ENCODE measurements at regions of chr10 and their contacts with region 1.

Region 1: DNA sequence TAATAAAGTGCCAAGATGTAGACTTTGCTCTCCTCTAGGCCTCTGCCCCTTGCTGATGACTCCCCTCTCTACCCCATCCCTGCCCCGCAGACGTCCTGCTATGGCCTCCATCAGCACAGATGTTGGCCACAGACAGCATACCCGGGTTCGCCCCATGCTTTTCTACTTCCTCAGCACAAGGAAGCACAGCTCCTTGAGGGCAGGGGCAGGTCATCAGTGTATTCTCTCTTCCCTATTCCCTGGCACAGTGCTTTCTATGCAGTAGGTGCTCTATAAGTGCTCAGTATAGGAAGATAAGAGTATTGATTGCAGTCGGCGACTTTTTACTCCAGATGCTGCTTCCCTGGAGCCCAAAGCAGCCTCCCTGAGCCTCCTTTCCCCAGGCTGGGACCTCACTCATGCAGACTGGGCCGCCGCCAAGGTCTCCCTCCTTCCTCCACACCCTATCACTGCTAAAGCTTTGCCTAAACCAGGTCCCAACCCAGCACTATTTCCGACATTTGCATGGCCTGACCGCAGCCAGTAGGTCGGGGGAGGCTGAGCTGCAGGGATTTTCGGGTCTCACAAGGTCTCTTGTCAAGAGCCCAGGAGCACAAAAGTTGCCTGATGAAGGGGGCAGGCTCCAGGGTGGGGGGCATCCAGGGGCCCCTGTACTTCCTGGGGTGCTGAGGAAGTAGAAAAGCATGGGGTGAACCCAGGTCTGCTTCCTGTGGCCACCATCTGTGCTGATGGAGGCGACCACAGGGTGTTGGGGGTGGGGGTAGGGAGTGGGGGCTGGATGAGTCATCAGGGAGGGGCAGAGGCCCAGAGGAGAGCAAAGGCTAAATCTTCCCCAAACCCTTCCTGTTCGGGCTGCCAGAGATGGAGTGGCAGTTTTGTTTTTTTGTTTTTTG is 8.0 kb downstream of the CALHM3 start:
- DNase-seq: peak; percentile 91
- H3K4me3 Mint-ChIP-seq: peak overlapping the region; percentile 59
- H3K27ac Mint-ChIP-seq: peak overlapping the region; percentile 89
- H3K4me1 Mint-ChIP-seq: peaks cover 51% of the 10 kb centered on the region
- H3K27me3 Mint-ChIP-seq: peaks cover 2% of the 10 kb centered on the region

Region 2: DNA sequence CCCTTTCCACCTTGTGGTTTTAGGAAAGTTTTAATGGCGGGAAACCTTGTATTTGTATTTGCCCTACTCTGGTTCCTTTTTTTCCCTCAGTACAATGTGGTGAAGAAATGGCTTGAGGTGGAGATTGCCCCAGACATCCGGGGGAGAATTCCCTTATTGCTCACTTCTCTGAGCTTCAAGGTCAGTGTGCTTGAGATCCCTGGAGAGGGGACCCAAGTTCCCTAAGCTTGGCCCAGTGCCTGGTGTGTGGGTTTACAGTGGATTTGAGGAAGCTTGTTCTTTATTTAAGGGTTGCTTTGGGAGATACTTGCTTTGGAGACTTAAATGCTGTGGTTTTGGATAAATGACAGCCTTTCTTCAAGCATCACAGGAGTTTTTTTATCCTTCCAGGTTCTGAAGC is 37.1 kb before region 1 on chr10:
- intact Hi-C with region 1: loop called (anchors 5 kb)
- DNase-seq: no peak
- H3K4me3 Mint-ChIP-seq: no peak overlapping the region
- H3K27ac Mint-ChIP-seq: no peak overlapping the region
- H3K4me1 Mint-ChIP-seq: peaks cover 28% of the 10 kb centered on the region
- H3K27me3 Mint-ChIP-seq: no peaks in the 10 kb centered on the region

Region 3: DNA sequence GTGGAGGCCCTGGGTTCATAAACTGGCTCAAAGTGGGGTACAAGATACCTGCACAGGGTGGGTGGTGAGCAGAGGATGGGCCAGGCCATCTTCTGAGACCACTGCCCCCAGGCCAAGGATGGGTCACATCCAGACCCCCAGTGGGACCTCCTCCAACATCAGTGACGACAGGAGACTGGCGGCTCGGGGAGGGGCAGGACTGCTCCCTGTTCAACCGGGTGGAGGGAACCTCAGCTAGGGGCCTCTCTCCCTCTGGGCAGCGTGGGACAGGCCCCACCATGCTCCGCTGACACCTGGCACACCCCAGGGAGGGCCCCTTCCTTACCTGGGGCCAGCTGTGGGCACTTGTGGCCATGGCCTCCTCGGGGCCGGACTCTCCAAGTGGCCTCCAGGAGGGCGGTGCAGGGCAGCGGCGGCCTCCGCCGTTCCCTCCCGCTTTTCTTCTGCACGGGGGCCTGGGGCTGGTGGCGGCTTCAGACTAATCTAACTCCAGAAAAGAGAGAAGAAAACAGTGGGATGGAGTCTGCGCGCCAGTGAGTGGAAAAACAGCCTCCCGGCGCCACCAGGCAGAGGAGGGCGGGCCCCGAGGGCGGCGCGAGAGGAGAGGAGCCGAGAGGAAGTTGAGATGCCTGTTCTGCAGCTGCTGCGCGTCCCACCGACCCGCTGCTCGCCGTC is 19.0 kb before region 1 on chr10 and contains the start of gene CALHM2:
- intact Hi-C with region 1: loop called (anchors 1 kb)
- DNase-seq: peak; percentile 90
- H3K4me3 Mint-ChIP-seq: peak within 1 kb of the TSS; percentile 95
- H3K27ac Mint-ChIP-seq: peak within 1 kb of the TSS; percentile 85
- H3K4me1 Mint-ChIP-seq: peaks cover 54% of the 10 kb centered on the region
- H3K27me3 Mint-ChIP-seq: no peaks in the 10 kb centered on the region
- total RNA-seq, gene CALHM2: 14.0 and 17.5 TPM in 2 replicates

Region 4: GRCh38 chr10:104246976-104247375 is 776.0 kb after region 1 on chr10:
- intact Hi-C with region 1: no loop called
- DNase-seq: peak; percentile 60
- H3K4me3 Mint-ChIP-seq: no peak overlapping the region
- H3K27ac Mint-ChIP-seq: peak overlapping the region; percentile 74
- H3K4me1 Mint-ChIP-seq: peaks cover 12% of the 10 kb centered on the region
- H3K27me3 Mint-ChIP-seq: peaks cover 22% of the 10 kb centered on the region